Mucosa of descending colon (tissue), 3 donors: ENCODE measurements at regions of chr4 and their contacts with region 1.

Region 1: GRCh38 chr4:38313999-38314561 is 349.9 kb upstream of the KLF3 start:
- DNase-seq: peak; percentile 60 to 76 (median 74)
- ATAC-seq: peak; percentile 74
- H3K4me3 ChIP-seq: no peak overlapping the region
- H3K4me1 ChIP-seq: peaks cover 37% of the 10 kb centered on the region
- CTCF ChIP-seq: no peak

Region 2: GRCh38 chr4:38230121-38230801 is 83.8 kb before region 1 on chr4:
- intact Hi-C with region 1: loop called in 1 of 2 experiments (anchors 2 kb)
- DNase-seq: peak; percentile 79 to 87 (median 87)
- ATAC-seq: peak; percentile 88
- H3K4me3 ChIP-seq: no peak overlapping the region
- H3K4me1 ChIP-seq: peaks cover 19% of the 10 kb centered on the region
- CTCF ChIP-seq: no peak